ENCODE measurements at regions of chrX and their contacts with region 1.

Region 1: DNA sequence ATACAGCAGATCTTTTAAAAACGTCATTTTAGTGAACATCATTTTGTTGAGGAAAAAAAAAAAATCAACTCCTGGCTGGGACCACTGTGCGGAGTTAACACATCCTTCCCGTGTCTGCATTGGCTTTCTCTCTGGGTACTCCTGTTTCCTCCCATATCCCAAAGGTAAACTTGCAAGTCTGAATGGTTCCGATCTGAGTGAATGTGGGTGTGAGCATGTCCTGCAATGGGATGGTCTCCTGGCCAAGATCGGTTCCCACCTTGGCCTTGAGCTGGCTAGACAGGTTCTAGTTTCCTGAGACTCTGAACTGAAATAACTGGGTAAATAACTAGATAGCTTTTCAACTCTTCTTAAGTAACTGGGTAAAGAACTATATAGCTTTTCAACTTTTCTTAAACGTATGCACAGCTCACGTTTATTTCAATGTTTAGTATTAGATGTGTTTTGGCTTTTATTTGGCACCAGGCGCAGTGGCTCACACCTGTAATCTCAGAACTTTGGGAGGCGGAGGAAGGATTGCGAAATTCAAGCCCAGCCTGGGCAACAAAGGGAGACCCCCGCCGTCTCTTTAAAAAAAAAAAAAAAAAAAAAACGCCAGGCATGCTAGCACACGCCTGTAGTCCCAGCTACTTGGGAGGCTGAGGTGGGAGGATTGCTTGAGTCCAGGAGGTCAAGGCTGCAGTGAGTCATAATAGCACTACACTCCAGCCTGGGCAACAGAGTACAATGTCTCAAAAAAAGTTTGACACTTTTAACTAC is 14.0 kb downstream of the RBMX start:
- DNase-seq: no peak
- H3K4me3 Mint-ChIP-seq: no peak overlapping the region
- H3K27ac Mint-ChIP-seq: peak overlapping the region; percentile 77
- H3K4me1 Mint-ChIP-seq: peaks cover 13% of the 10 kb centered on the region
- H3K27me3 Mint-ChIP-seq: no peaks in the 10 kb centered on the region

Region 2: DNA sequence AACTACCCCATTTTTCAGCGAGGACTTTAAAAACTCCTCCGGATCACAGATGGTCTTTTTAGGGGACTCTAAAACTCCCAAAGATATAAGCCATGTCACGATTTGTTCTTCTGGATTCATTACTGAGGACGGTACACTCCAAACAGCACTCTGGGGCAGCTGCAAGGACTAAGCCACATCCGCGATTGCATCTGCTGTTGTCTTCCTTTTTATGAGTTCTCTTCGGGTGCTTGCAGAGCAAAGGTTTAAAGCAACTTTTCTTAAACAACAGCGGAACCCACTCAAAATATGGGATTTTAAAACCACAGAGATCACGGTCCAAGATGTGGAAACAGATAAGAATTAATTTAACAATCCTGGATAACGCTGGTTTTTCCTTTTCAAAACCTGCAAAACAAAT is 85.8 kb before region 1 on chrX and contains the start of gene ARHGEF6:
- intact Hi-C with region 1: loop called (anchors 5 kb)
- DNase-seq: peak; percentile 81
- H3K4me3 Mint-ChIP-seq: peak within 1 kb of the TSS; percentile 86
- H3K27ac Mint-ChIP-seq: peak within 1 kb of the TSS; percentile 94
- H3K4me1 Mint-ChIP-seq: peaks cover 53% of the 10 kb centered on the region
- H3K27me3 Mint-ChIP-seq: no peaks in the 10 kb centered on the region
- total RNA-seq, gene ARHGEF6: 37.4 and 38.0 TPM in 2 replicates

Region 3: DNA sequence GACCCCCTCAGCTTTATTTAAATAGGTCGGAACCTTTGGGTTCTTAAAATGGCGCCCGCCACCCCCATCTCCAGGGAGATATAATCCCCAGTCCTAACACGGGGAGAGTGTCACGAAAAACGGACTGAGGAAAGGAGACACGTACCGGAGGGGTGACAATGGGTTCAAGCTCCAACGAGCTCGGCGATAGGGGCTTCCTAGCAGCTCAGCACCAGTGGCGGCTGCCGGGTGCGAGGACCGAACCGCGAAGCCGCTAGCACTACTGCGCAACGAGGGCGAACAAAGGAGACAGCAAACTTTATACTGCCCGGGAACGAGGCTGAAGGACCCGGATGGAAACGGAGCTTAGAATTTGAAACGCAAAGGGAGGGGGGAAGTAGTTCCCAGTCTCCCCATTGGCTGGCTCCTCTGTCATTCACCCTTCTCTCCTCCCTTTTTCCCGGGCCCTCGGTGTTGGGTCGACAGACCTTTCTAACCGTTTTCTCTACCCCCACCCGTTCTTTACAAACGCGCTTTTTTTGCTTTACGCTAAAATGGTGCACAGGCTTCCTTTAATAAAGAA is 14.0 kb after region 1 on chrX and contains the start of gene RBMX:
- intact Hi-C with region 1: loop called (anchors 1 kb)
- DNase-seq: peak; percentile 96
- H3K4me3 Mint-ChIP-seq: peak within 1 kb of the TSS; percentile 97
- H3K27ac Mint-ChIP-seq: peak within 1 kb of the TSS; percentile 99
- H3K4me1 Mint-ChIP-seq: peaks cover 2% of the 10 kb centered on the region
- H3K27me3 Mint-ChIP-seq: no peaks in the 10 kb centered on the region
- total RNA-seq, gene RBMX: 324 and 334 TPM in 2 replicates

Region 4: GRCh38 chrX:137342973-137343372 is 476.5 kb after region 1 on chrX:
- intact Hi-C with region 1: no loop called
- DNase-seq: no peak
- H3K4me3 Mint-ChIP-seq: no peak overlapping the region
- H3K27ac Mint-ChIP-seq: no peak overlapping the region
- H3K4me1 Mint-ChIP-seq: no peaks in the 10 kb centered on the region
- H3K27me3 Mint-ChIP-seq: no peaks in the 10 kb centered on the region

Measured in activated CD4-positive, alpha-beta T cell treated with anti-CD3 and anti-CD28 coated beads, Interleukin-2, amount 10 ng/mL, durations not matched to agents 24 days and 14 days (primary cell).